CD4-positive, alpha-beta T cell (primary cell): ENCODE measurements at regions of chr3 and their contacts with region 1.

Region 1: DNA sequence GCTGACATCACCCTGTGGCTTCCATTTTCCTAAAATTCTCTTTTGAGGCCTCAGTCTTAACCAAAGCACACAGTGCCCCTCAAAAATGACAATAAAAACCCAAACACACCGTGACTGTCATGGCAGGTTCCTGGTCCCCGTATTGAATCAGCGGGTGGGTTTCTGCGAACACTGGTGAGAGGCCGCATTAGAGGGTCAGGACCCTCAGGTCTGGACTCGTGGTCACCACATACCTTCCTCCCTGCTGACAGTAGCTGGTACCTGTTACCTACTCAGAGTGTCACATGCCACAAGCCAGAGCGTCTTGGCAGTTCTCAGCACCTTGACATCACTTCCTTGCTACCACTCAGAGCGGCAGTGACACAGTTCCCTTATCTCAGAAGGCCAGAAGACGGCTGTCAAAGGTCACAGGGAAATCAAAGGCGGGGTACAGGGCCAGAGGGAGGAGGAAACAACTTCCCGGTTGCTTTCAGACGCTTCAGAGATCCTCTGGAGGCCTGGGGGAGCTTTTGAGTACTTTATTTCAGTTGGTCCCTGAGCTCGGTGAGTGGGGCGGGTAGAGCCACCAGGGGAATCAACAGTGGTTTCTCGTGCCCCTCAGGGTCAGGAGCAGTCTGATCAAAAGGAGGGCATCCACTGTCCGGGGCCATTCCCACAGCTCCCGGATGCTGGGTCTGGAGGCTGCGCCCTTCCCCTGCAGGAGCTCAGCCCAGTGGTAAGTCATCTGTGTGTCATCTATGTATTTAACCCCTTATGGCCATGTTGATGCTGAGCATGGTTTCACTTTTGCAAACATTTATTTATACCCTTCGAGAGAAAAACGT is at the starts of genes CCR5AS and CCRL2:
- DNase-seq: peak in 11 of 14 experiments; percentile 2 to 77 (median 22)
- ATAC-seq: peak; percentile 85
- H3K4me3 ChIP-seq: peak within 1 kb of the TSS; percentile 51
- H3K4me3 Mint-ChIP-seq: peak within 1 kb of the TSS; percentile 86
- H3K27ac ChIP-seq: peak within 1 kb of the TSS; percentile 22 to 71
- H3K27ac Mint-ChIP-seq: peak within 1 kb of the TSS; percentile 85
- H3K4me1 ChIP-seq: peaks cover 22% of the 10 kb centered on the region
- H3K4me1 Mint-ChIP-seq: peaks cover 31% of the 10 kb centered on the region
- H3K27me3 ChIP-seq: no peaks in the 10 kb centered on the region
- H3K27me3 Mint-ChIP-seq: no peaks in the 10 kb centered on the region
- CTCF ChIP-seq: no peak
- total RNA-seq, gene CCRL2: 4.3 to 4.5 TPM

Region 2: GRCh38 chr3:45635477-45636256 is 771.3 kb before region 1 on chr3:
- CTCF ChIA-PET with region 1: no interaction called
- POLR2A ChIA-PET with region 1: no interaction called
- intact Hi-C with region 1: no loop called
- DNase-seq: no peak
- ATAC-seq: no peak
- H3K4me3 ChIP-seq: no peak overlapping the region
- H3K4me3 Mint-ChIP-seq: no peak overlapping the region
- H3K27ac ChIP-seq: no peak overlapping the region
- H3K27ac Mint-ChIP-seq: no peak overlapping the region
- H3K4me1 ChIP-seq: peaks cover 13% of the 10 kb centered on the region
- H3K4me1 Mint-ChIP-seq: peaks cover 20% of the 10 kb centered on the region
- H3K27me3 ChIP-seq: no peaks in the 10 kb centered on the region
- H3K27me3 Mint-ChIP-seq: no peaks in the 10 kb centered on the region
- CTCF ChIP-seq: no peak

Region 3: DNA sequence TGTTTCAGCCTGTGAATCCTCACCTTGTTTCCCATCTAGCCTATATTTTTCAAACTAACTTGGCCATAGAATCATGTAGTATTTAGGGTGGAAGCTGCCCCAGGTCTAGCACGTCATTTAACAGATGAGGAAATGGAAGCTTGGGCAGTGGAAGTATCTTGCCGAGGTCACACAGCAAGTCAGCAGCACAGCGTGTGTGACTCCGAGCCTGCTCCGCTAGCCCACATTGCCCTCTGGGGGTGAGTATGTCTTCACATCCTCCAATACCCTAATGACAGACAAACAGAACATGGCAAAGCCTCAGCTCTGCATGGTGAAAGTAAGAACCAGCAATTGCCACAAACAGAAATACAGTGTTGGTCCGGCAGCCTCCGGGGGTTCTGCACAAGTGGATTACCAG is 38.4 kb before region 1 on chr3:
- CTCF ChIA-PET with region 1: no interaction called
- POLR2A ChIA-PET with region 1: no interaction called
- intact Hi-C with region 1: no loop called
- DNase-seq: peak; percentile 18 to 90 (median 54)
- ATAC-seq: peak; percentile 74
- H3K4me3 ChIP-seq: no peak overlapping the region
- H3K4me3 Mint-ChIP-seq: peak overlapping the region; percentile 2
- H3K27ac ChIP-seq: no peak overlapping the region
- H3K27ac Mint-ChIP-seq: peak overlapping the region; percentile 77
- H3K4me1 ChIP-seq: peaks cover 57% of the 10 kb centered on the region
- H3K4me1 Mint-ChIP-seq: peaks cover 40% of the 10 kb centered on the region
- H3K27me3 ChIP-seq: no peaks in the 10 kb centered on the region
- H3K27me3 Mint-ChIP-seq: no peaks in the 10 kb centered on the region
- CTCF ChIP-seq: no peak

Region 4: GRCh38 chr3:46440531-46441294 is 33.7 kb after region 1 on chr3:
- CTCF ChIA-PET with region 1: no interaction called
- POLR2A ChIA-PET with region 1: no interaction called
- intact Hi-C with region 1: loop called in 1 of 2 experiments (anchors 1 kb)
- DNase-seq: peak in 8 of 14 experiments; percentile 7 to 72 (median 44)
- ATAC-seq: peak; percentile 97
- H3K4me3 ChIP-seq: no peak overlapping the region
- H3K4me3 Mint-ChIP-seq: peak overlapping the region; percentile 54
- H3K27ac ChIP-seq: no peak overlapping the region
- H3K27ac Mint-ChIP-seq: peak overlapping the region; percentile 78
- H3K4me1 ChIP-seq: peaks cover 17% of the 10 kb centered on the region
- H3K4me1 Mint-ChIP-seq: peaks cover 22% of the 10 kb centered on the region
- H3K27me3 ChIP-seq: no peaks in the 10 kb centered on the region
- H3K27me3 Mint-ChIP-seq: no peaks in the 10 kb centered on the region
- CTCF ChIP-seq: no peak

Region 5: DNA sequence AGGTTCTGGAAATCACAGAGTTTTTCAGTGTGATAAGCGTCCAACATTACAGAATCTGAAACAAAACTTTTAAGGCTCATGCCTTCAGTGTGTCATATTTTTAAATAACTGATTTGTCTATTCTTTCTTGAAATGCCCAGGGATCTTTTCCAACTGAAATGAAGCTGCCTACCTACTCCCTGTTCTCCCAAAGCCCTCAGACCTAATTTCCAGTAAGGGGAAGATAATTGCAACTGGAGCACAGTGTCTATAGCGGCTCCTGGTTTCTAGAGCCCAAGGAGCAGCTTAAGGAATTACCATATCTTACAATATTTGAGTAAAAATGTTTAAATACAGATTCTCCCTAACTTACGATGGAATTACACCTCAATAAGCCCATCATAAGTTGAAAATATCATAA is 126.1 kb after region 1 on chr3:
- CTCF ChIA-PET with region 1: no interaction called
- POLR2A ChIA-PET with region 1: no interaction called
- intact Hi-C with region 1: no loop called
- DNase-seq: no peak
- ATAC-seq: no peak
- H3K4me3 ChIP-seq: no peak overlapping the region
- H3K4me3 Mint-ChIP-seq: no peak overlapping the region
- H3K27ac ChIP-seq: no peak overlapping the region
- H3K27ac Mint-ChIP-seq: no peak overlapping the region
- H3K4me1 ChIP-seq: peaks cover 13% of the 10 kb centered on the region
- H3K4me1 Mint-ChIP-seq: peaks cover 32% of the 10 kb centered on the region
- H3K27me3 ChIP-seq: no peaks in the 10 kb centered on the region
- H3K27me3 Mint-ChIP-seq: no peaks in the 10 kb centered on the region
- CTCF ChIP-seq: no peak